ENCODE measurements at regions of chr19 and their contacts with region 1.

Region 1: GRCh38 chr19:12766051-12766521 is 9.3 kb downstream of the HOOK2 start:
- DNase-seq: peak; percentile 91
- H3K4me3 Mint-ChIP-seq: peak overlapping the region; percentile 24
- H3K27ac Mint-ChIP-seq: no peak overlapping the region
- H3K4me1 Mint-ChIP-seq: peaks cover 7% of the 10 kb centered on the region
- H3K27me3 Mint-ChIP-seq: no peaks in the 10 kb centered on the region

Region 2: DNA sequence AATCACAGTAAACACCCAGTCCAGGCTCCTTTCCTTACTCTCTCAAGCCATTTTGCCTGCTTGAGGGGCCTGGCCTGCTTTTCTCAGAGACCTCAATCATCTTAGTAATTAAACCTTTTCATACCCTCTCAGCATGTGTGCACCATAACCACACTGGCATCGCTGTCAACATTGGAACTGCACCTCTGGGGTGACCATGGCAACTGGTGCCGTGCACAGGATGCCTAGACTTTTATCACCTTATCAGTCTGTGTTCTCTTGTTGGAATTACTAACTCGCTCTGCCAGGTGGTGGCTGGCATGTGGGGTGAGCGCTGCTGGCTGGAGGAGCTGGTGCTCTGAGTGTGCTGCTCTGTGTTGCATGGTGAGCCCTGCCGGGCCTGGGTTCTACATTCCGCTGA is 263.9 kb before region 1 on chr19:
- CTCF ChIA-PET with region 1: no interaction called
- intact Hi-C with region 1: no loop called
- DNase-seq: no peak
- H3K4me3 Mint-ChIP-seq: no peak overlapping the region
- H3K27ac Mint-ChIP-seq: no peak overlapping the region
- H3K4me1 Mint-ChIP-seq: no peaks in the 10 kb centered on the region
- H3K27me3 Mint-ChIP-seq: no peaks in the 10 kb centered on the region

Region 3: DNA sequence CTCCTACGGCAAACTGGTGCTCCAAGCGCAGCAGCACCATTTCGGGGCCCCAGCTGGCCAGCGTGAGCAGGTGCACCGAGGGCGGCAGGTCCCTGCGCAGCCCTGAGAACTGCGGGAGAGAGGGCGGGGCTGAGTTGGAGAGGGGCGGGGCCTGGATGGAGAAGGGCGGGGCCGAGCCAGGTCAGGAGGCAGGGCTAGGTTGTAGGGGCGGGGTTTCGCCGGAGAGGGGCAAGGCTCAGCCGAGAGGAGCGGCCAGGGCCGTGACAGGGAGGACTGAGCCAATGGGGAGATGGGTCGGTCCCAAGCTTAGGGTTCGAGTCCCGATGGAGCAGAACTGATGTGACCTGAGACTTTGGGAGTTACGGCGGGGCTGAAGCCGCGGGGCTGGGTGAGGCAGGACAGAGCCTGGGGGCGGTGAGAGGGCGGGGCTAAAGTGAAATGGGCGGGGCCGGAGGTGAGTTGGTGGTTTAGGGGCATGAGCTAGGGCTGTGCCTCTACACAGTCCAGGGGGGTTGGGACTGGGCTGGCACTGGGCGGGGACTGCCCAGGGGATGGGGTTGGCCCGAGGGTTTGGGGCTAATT is 118.5 kb before region 1 on chr19:
- CTCF ChIA-PET with region 1: no interaction called
- intact Hi-C with region 1: no loop called
- DNase-seq: peak; percentile 45
- H3K4me3 Mint-ChIP-seq: no peak overlapping the region
- H3K27ac Mint-ChIP-seq: no peak overlapping the region
- H3K4me1 Mint-ChIP-seq: no peaks in the 10 kb centered on the region
- H3K27me3 Mint-ChIP-seq: no peaks in the 10 kb centered on the region

Region 4: DNA sequence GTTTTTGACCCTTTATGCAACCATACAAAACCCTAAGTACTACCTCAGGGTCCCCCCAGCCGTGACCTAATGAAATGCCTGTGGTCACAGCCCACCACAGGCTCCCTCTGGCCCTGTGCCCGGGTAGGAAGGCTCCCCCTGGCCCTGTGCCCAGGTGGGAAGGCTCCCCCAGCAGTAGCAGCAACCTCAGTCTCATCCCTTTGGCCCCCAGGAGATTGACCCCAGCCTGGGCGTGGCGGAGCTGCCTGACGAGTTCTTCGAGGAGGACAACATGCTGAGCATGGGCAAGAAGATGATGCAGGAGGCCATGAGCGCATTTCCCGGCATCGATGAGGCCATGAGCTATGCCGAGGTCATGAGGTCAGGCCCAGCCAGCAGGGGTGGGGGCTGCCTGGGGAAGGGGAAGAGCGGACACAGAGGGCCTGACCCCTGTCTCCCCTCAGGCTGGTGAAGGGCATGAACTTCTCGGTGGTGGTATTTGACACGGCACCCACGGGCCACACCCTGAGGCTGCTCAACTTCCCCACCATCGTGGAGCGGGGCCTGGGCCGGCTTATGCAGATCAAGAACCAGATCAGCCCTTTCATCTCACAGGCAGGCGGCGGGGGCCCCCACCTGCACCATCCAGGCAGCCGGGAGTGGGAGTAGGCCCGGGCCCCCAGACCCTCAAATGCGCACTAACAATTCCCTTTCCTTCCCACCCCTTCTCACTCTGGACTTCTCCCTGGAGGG is 20.8 kb before region 1 on chr19:
- CTCF ChIA-PET with region 1: interaction called, 13 read pairs
- intact Hi-C with region 1: no loop called
- DNase-seq: no peak
- H3K4me3 Mint-ChIP-seq: no peak overlapping the region
- H3K27ac Mint-ChIP-seq: no peak overlapping the region
- H3K4me1 Mint-ChIP-seq: peaks cover 3% of the 10 kb centered on the region
- H3K27me3 Mint-ChIP-seq: peaks cover 4% of the 10 kb centered on the region

Region 5: DNA sequence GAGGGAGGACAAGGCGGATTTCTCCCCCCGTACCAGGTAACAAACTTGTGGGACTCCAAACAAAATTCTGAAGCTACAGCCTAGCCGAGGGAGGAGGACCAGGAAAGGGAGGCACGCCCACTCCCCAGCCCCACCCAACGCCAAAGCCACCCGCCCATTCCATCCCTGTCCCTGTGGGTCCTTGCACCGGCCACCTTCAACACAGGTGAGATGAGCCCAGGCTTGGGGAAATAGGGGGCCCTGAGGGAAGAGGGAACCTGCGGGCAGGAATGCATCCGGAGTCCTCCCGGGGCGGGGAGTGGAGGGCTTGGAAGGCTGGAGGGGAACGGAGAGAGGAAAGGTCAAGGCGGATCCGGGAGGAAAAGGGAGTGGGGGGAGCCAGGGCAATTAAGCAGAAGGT is 14.5 kb before region 1 on chr19 and contains the start of gene BEST2:
- CTCF ChIA-PET with region 1: interaction called, 13 read pairs
- intact Hi-C with region 1: no loop called
- DNase-seq: no peak
- H3K4me3 Mint-ChIP-seq: no peak within 1 kb of the TSS
- H3K27ac Mint-ChIP-seq: no peak within 1 kb of the TSS
- H3K4me1 Mint-ChIP-seq: peaks cover 3% of the 10 kb centered on the region
- H3K27me3 Mint-ChIP-seq: peaks cover 29% of the 10 kb centered on the region
- total RNA-seq, gene BEST2: not detected

Region 6: GRCh38 chr19:12789904-12790619 is 24.0 kb after region 1 on chr19:
- CTCF ChIA-PET with region 1: interaction called, 341 read pairs
- intact Hi-C with region 1: loop called (anchors 5 kb)
- DNase-seq: peak; percentile 97
- H3K4me3 Mint-ChIP-seq: peak overlapping the region; percentile 97
- H3K27ac Mint-ChIP-seq: peak overlapping the region; percentile 96
- H3K4me1 Mint-ChIP-seq: peaks cover 25% of the 10 kb centered on the region
- H3K27me3 Mint-ChIP-seq: no peaks in the 10 kb centered on the region

Region 7: GRCh38 chr19:12796146-12797071 is 30.3 kb after region 1 on chr19:
- CTCF ChIA-PET with region 1: interaction called, 341 read pairs
- intact Hi-C with region 1: loop called (anchors 5 kb)
- DNase-seq: peak; percentile 84
- H3K4me3 Mint-ChIP-seq: peak overlapping the region; percentile 67
- H3K27ac Mint-ChIP-seq: peak overlapping the region; percentile 74
- H3K4me1 Mint-ChIP-seq: peaks cover 40% of the 10 kb centered on the region
- H3K27me3 Mint-ChIP-seq: no peaks in the 10 kb centered on the region

Region 8: GRCh38 chr19:12847159-12848139 is 81.4 kb after region 1 on chr19:
- CTCF ChIA-PET with region 1: interaction called, 60 read pairs
- intact Hi-C with region 1: loop called (anchors 1 kb)
- DNase-seq: peak; percentile 87
- H3K4me3 Mint-ChIP-seq: peak overlapping the region; percentile 36
- H3K27ac Mint-ChIP-seq: no peak overlapping the region
- H3K4me1 Mint-ChIP-seq: peaks cover 3% of the 10 kb centered on the region
- H3K27me3 Mint-ChIP-seq: peaks cover 21% of the 10 kb centered on the region

Region 9: DNA sequence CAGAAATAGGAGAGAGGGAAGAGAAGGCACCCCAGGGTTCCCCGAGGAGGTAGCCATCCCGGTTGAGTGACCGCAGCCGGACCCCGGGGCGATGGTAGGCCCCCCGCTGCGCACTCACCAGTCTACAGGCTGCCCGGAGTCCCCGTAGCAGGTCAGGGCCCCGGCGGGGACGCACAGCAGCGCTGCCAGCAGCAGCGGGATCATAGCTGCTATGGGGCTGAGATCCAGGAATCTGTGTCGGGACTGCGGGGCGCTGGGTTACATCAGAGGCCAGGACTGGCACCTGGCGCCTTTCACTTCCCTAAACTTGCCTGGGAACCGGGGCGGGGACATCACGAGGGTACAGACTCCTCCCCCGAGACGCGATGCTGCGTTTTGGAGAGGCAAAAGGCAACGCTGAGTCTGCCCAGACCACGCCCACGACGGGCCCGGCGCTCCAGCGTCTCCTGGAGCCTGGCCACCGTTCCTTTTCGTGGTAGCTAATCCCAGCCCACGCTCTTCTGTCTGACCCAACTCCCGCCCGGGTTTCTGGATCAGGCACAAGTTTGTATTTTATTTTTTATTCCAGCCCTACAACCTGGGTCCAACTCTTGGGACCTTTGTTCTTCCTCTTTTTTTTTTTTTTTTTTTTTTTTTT is 115.2 kb after region 1 on chr19 and contains the start of gene DNASE2:
- CTCF ChIA-PET with region 1: interaction called, 11 read pairs
- intact Hi-C with region 1: no loop called
- DNase-seq: peak; percentile 97
- H3K4me3 Mint-ChIP-seq: peak within 1 kb of the TSS; percentile 88
- H3K27ac Mint-ChIP-seq: peak within 1 kb of the TSS; percentile 76
- H3K4me1 Mint-ChIP-seq: peaks cover 28% of the 10 kb centered on the region
- H3K27me3 Mint-ChIP-seq: no peaks in the 10 kb centered on the region
- total RNA-seq, gene DNASE2: 30.9 to 31.6 TPM

Measured in activated naive CD4-positive, alpha-beta T cell treated with anti-CD3 and anti-CD28 coated beads for 36 hours (primary cell).